Endothelial cell of umbilical vein (primary cell): ENCODE measurements at regions of chr20 and their contacts with region 1.

Region 1: GRCh38 chr20:17682103-17682888 is at the start of gene RRBP1:
- DNase-seq: peak; percentile 98
- H3K4me3 ChIP-seq: peak within 1 kb of the TSS; percentile 44 to 90 (median 71)
- H3K27ac ChIP-seq: peak within 1 kb of the TSS; percentile 76
- H3K4me1 ChIP-seq: peaks cover 13% of the 10 kb centered on the region
- H3K27me3 ChIP-seq: peaks cover 20 to 28% of the 10 kb centered on the region in 2 experiments
- CTCF ChIP-seq: peak; percentile 70 to 72
- POLR2A ChIP-seq: peak; percentile 96
- total RNA-seq, gene RRBP1: 201 and 236 TPM in 2 replicates

Region 2: DNA sequence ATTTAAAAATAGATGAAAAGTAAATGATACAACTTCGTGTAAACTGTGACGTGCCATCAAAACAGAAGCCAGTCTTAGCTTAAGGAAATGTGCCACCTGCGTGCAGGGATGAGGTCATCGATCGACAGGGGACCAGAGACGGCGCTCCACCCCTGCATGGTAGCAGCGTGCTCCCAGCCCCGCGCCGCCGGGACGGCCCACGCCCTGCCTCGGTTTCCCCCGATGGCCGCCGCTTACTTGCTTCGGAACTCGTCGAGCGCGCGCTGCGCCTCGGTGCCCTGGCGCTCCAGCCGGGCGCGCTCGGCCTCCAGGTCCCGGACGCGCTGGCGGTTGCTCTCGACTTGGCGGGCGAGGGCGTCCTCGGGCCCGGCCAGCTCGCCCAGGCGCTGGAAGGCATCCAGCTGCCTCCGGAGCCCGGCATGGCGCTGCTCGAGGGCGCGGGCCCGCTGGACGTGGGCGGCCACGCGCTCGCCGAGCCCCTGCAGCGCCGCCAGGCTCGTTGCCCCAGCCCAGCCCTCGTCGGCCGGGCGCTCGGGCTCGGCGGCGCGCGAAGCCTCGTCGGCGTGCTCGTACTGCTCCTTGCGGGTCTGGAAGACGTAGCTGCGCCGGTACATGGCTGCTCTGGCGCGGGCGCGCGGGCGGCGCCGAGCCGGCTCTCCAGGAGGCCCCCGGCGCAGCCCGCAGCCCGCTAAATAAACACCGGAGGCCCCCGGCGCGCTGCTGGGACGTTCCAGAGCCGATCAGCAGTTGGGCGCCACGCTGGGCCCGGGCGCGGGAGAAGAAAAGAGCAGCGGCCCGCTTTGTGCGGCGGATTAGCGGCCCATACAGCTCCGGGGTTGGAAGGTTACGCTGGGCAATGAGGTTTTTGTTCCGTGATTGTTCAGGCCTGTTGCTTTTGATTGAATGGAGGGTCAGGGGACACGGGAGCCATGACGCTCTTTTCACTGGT is 151.3 kb before region 1 on chr20 and contains the start of gene BFSP1:
- CTCF ChIA-PET with region 1: interaction called, 3 read pairs
- POLR2A ChIA-PET with region 1: interaction called, 3 read pairs
- dilution Hi-C with region 1: no loop called
- intact Hi-C with region 1: loop called (anchors 2 kb)
- DNase-seq: peak; percentile 72
- H3K4me3 ChIP-seq: peak within 1 kb of the TSS; percentile 16 to 47 (median 45)
- H3K27ac ChIP-seq: peak within 1 kb of the TSS; percentile 41
- H3K4me1 ChIP-seq: peaks cover 15% of the 10 kb centered on the region
- H3K27me3 ChIP-seq: no peaks in the 10 kb centered on the region
- CTCF ChIP-seq: no peak
- POLR2A ChIP-seq: peak; percentile 41
- total RNA-seq, gene BFSP1: 3.7 and 5.2 TPM in 2 replicates

Region 3: GRCh38 chr20:17666481-17666880 is 15.8 kb before region 1 on chr20:
- CTCF ChIA-PET with region 1: interaction called, 13 read pairs
- POLR2A ChIA-PET with region 1: interaction called, 12 read pairs
- dilution Hi-C with region 1: no loop called
- intact Hi-C with region 1: loop called (anchors 1 kb)
- DNase-seq: peak; percentile 76
- H3K4me3 ChIP-seq: no peak overlapping the region
- H3K27ac ChIP-seq: peak overlapping the region; percentile 89
- H3K4me1 ChIP-seq: peaks cover 27% of the 10 kb centered on the region
- H3K27me3 ChIP-seq: no peaks in the 10 kb centered on the region
- CTCF ChIP-seq: no peak
- POLR2A ChIP-seq: no peak

Region 4: GRCh38 chr20:17849901-17850683 is 167.8 kb after region 1 on chr20:
- CTCF ChIA-PET with region 1: interaction called, 8 read pairs
- POLR2A ChIA-PET with region 1: no interaction called
- dilution Hi-C with region 1: no loop called
- intact Hi-C with region 1: loop called (anchors 1 kb)
- DNase-seq: peak; percentile 97
- H3K4me3 ChIP-seq: no peak overlapping the region
- H3K27ac ChIP-seq: peak overlapping the region; percentile 80
- H3K4me1 ChIP-seq: peaks cover 26% of the 10 kb centered on the region
- H3K27me3 ChIP-seq: no peaks in the 10 kb centered on the region
- CTCF ChIP-seq: no peak
- POLR2A ChIP-seq: no peak

Region 5: DNA sequence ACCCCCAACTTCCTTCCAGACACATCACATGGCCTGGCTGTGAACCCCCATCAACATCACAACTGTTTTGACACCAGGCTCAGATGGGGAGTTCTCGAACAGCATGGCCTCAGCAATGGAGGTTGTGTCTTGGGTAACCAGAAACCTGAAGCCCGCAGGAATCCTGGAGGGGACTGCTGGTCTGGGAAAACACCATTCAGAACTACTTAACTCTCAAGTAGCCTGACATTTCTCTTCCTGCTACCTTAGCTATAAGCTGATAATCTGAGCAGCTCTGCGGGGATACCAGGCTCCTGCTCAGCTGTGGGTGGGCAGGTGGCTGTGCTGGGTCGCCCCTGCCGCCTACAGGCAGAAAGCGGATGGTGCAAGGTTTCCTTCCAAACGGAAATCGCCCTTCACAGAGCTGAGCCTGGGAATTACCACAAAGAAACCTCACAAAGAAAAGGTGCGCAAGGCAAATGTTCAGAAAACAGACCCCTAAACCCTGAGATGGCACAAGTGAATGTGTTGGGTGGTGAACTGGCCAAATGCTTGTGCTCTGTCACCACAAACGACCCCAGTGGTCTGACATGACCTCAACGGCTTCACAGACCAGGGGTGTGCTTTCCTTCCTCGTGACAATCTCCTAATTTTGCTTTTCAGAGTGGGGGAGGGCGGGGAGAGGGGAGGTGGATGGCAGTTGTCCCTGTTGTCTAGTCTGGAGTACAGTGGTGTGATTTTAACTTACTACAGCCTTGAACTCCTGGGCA is 256.7 kb after region 1 on chr20:
- CTCF ChIA-PET with region 1: interaction called, 52 read pairs
- POLR2A ChIA-PET with region 1: interaction called, 4 read pairs
- dilution Hi-C with region 1: no loop called
- intact Hi-C with region 1: loop called (anchors 1 kb)
- DNase-seq: peak; percentile 70
- H3K4me3 ChIP-seq: no peak overlapping the region
- H3K27ac ChIP-seq: no peak overlapping the region
- H3K4me1 ChIP-seq: peaks cover 14% of the 10 kb centered on the region
- H3K27me3 ChIP-seq: no peaks in the 10 kb centered on the region
- CTCF ChIP-seq: peak; percentile 85 to 97
- POLR2A ChIP-seq: peak; percentile 14